ENCODE measurements at regions of chr6 and their contacts with region 1.

Region 1: GRCh38 chr6:25138237-25139125 is 140.7 kb upstream of the CARMIL1 start:
- DNase-seq: peak; percentile 68 to 75
- ATAC-seq: peak; percentile 92
- H3K4me3 ChIP-seq: peak overlapping the region; percentile 52 to 99
- H3K27ac ChIP-seq: peak overlapping the region; percentile 99
- H3K4me1 ChIP-seq: peaks cover 0 to 1% of the 10 kb centered on the region in 2 donors
- H3K27me3 ChIP-seq: no peaks in the 10 kb centered on the region

Region 2: DNA sequence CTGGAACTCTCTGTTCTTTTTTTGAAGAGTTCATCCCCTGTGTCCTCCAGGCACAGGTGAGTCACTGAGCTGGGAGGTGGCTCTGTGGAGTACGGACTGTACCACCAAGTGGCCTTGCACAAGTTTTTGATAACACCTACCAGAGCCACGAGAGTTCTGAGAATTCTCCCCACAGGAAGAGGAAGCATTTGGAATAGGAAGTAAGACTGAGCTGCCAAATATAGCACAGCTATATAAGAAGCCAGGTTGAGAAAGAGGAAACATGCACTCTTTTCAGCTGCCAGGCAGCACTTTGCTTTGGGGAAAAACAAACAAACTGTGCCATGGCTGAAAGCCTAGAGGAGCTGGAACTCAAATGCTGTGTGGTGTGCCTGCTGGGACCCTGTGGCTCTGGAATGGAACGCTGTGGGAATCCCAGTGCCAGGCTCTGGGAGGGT is 131.9 kb before region 1 on chr6:
- intact Hi-C with region 1: no loop called
- DNase-seq: peak in 1 of 2 donors; percentile 50
- ATAC-seq: peak; percentile 82
- H3K4me3 ChIP-seq: no peak overlapping the region
- H3K27ac ChIP-seq: peak overlapping the region in 1 of 2 donors; percentile 15
- H3K4me1 ChIP-seq: peaks cover 0 to 1% of the 10 kb centered on the region in 2 donors
- H3K27me3 ChIP-seq: no peaks in the 10 kb centered on the region

Region 3: DNA sequence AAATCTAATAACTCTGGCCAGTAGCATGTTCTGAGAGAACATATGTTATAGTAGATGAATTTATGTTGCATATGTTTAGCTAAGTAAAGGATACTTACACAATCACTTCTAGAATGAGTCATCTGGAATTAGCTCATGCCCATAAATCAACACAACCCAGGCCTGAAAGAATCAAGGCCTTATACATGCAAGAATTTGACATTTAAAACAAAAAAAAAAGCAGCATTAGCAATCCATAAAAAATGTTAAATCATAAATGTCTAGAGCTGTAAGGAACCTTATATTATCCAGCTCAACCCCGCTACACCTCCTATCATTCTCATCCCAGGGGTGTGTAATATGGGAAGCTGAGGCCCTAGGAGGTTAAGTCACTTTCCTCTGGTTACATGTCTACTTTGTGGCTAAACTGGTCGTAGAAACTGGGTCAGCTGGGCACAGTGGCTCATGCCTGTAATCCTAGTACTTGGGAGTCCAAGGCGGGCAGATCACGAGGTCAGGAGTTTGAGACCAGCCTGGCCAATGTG is 35.5 kb after region 1 on chr6:
- intact Hi-C with region 1: loop called in 1 of 2 experiments (anchors 5 kb)
- DNase-seq: no peak
- ATAC-seq: peak; percentile 55
- H3K4me3 ChIP-seq: no peak overlapping the region
- H3K27ac ChIP-seq: peak overlapping the region in 1 of 2 donors; percentile 83
- H3K4me1 ChIP-seq: peaks cover 6 to 15% of the 10 kb centered on the region in 2 donors
- H3K27me3 ChIP-seq: no peaks in the 10 kb centered on the region

Region 4: DNA sequence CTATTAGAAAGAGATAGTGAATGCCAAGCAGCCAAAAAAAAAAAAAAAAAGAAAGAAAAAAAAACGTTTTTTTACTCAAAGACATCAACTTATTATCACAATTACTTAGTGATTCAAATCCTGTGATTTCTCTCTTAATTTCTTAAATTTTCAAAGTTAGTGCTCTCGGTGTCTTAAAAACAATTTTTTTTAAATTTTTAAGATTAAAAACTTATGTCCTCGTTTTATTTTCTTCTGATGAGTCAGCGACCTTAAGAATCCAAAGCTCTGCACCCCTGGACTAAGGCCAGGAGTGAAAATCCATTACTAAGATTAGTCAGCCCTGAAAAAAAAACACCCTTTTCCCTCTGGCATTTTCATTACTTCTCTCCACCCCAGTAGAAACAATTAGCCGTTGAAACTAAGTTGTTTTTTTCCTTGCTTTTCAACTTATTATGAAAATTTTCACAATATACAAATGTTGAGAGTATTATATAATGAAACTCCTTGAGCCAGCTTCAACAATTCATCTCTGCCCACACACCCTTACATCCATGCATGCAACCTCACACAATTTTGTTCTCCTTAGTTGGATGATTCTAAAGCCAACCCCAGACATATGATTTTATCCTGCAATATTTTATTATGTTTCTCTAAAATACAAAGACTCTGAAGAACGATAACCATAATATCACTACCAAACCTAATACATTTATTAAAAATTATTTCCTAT is 55.1 kb after region 1 on chr6:
- intact Hi-C with region 1: loop called in 1 of 2 experiments (anchors 5 kb)
- DNase-seq: no peak
- ATAC-seq: peak; percentile 92
- H3K4me3 ChIP-seq: no peak overlapping the region
- H3K27ac ChIP-seq: peak overlapping the region in 1 of 2 donors; percentile 41
- H3K4me1 ChIP-seq: peaks cover 6 to 9% of the 10 kb centered on the region in 2 donors
- H3K27me3 ChIP-seq: no peaks in the 10 kb centered on the region

Measured in aorta (tissue), 5 donors.